CD8-positive, alpha-beta memory T cell (primary cell): ENCODE measurements at regions of chr19 and their contacts with region 1.

Region 1: GRCh38 chr19:13060964-13061927 is 41.4 kb downstream of the LYL1 start:
- DNase-seq: peak; percentile 63 to 76 (median 67)
- H3K4me3 ChIP-seq: peak overlapping the region; percentile 81
- H3K4me3 Mint-ChIP-seq: peak overlapping the region; percentile 72 to 94 (median 77)
- H3K27ac ChIP-seq: no peak overlapping the region
- H3K27ac Mint-ChIP-seq: peak overlapping the region in 3 of 8 donors; percentile 23 to 66 (median 47)
- H3K4me1 ChIP-seq: peaks cover 16% of the 10 kb centered on the region
- H3K4me1 Mint-ChIP-seq: peaks cover 8 to 11% (median 11%) of the 10 kb centered on the region in 3 donors
- H3K27me3 ChIP-seq: peaks cover 4% of the 10 kb centered on the region
- H3K27me3 Mint-ChIP-seq: peaks cover 15 to 33% of the 10 kb centered on the region in 2 donors

Region 2: DNA sequence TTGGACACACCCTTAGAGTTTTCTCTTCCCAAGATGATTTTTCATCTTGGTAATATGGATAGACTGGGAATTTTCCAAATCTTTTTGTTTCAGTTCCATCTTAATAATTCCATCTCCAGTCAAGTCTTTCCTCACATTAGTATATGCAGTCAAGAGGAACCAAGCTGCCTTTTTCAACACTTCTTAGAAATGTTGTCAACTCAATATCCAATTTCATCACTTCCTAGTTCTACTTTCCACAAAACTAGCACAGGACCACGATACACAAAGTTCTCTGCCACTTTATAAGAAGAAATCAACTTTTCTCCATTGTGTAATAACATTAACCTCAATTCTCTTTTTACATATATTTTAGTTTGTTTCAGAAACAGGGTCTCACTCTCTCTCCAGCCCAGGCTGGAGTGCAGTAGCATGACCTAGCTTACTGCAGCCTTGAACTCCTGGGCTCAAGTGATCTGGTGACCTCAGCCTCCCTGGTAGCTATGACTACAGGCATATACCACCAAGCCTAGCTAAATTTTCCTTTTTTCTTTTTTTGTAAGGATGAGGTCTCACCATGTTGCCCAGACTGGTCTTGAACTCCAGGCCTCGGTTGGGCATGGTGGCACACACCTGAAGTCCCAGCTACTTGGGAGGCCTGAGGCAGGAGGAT is 635.9 kb before region 1 on chr19:
- CTCF ChIA-PET with region 1: no interaction called
- POLR2A ChIA-PET with region 1: no interaction called
- DNase-seq: no peak
- H3K4me3 ChIP-seq: no peak overlapping the region
- H3K4me3 Mint-ChIP-seq: no peak overlapping the region
- H3K27ac ChIP-seq: no peak overlapping the region
- H3K27ac Mint-ChIP-seq: no peak overlapping the region
- H3K4me1 ChIP-seq: no peaks in the 10 kb centered on the region
- H3K4me1 Mint-ChIP-seq: no peaks in the 10 kb centered on the region
- H3K27me3 ChIP-seq: no peaks in the 10 kb centered on the region
- H3K27me3 Mint-ChIP-seq: no peaks in the 10 kb centered on the region

Region 3: DNA sequence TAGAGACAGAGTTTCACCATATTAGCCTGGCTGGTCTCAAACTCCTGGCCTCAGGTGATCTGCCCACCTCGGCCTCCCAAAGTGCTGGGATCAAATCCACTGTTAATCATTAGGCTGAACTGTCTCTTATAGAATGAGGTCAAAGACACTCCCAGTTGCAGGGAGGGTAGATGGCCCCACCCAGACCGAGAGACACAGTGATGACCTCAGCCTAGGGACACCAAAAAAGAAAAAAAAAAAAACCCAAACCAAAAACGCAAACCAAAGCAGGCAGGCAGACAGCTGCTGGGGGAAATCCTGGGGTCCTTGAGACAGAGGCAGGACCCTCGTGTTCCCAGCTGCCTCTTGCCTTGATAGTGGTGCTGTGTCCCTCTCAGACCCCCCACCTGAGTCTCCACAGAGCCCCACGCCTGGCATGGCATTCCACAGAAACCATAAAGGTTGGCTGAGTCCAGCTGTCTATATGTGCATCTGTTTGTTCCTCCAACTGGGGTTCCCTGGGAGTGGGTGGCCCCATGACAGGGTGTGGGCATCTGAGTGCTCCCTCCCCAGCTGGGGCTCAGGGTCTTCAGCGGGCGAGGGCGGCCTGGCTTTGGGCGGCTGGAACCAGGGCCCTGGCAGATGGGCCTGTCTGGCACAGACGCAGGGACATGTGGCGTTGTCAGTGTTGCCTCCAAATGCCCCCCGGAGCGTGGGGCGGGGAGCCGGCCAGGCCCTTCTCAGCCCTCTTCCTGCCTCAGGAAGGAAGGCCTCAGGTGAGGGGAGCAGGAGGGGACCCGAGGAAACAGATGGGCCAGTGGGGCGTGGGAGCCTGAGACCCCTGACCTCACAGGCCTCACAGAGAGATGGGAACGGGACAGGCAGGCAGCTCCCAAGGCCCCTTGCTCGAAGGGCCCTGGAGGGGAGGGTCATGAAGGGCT is 86.7 kb before region 1 on chr19:
- CTCF ChIA-PET with region 1: interaction called, 95 read pairs
- POLR2A ChIA-PET with region 1: no interaction called
- DNase-seq: no peak
- H3K4me3 ChIP-seq: no peak overlapping the region
- H3K4me3 Mint-ChIP-seq: no peak overlapping the region
- H3K27ac ChIP-seq: no peak overlapping the region
- H3K27ac Mint-ChIP-seq: peak overlapping the region in 1 of 8 donors; percentile 54
- H3K4me1 ChIP-seq: no peaks in the 10 kb centered on the region
- H3K4me1 Mint-ChIP-seq: peaks cover 0 to 3% (median 0%) of the 10 kb centered on the region in 3 donors
- H3K27me3 ChIP-seq: no peaks in the 10 kb centered on the region
- H3K27me3 Mint-ChIP-seq: peaks cover 19 to 26% of the 10 kb centered on the region in 2 donors

Region 4: DNA sequence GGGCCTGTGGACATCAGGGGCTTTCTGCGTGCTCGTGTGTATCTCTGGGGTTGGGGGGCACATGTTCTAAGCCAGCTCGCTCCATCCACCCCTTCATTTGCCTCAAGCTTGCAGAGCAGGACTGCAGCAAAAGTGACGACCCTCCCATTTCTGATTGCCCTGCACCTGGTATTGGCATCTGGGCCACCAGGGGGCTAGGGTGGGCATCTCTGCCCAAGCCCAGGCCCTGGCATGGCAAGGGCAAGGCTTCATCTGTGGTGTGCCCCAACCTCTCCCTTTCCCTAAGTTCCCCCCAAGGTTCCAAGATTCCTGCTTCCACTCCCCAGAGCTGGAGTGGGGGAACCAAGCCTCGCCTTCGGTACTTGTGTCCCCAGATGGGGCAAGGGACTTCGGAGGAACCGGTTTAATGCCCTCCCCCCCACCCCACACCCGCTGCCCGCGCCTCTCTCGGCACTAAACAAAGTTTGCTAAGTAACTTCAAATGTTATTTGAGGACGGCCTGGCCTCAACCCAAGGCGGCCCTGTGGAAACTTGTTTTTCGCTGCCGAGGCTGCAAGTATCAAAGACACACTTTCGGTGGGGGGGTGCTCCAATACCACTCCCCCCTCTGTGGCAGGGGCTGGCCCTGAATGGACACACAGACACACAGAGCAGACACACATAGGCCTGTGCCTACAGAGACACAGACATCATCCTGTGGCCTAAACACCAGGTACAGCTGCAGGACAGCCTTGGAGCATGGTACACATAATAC is 53.8 kb before region 1 on chr19:
- CTCF ChIA-PET with region 1: interaction called, 10 read pairs
- POLR2A ChIA-PET with region 1: no interaction called
- DNase-seq: no peak
- H3K4me3 ChIP-seq: no peak overlapping the region
- H3K4me3 Mint-ChIP-seq: no peak overlapping the region
- H3K27ac ChIP-seq: no peak overlapping the region
- H3K27ac Mint-ChIP-seq: no peak overlapping the region
- H3K4me1 ChIP-seq: peaks cover 4% of the 10 kb centered on the region
- H3K4me1 Mint-ChIP-seq: peaks cover 0 to 5% (median 1%) of the 10 kb centered on the region in 3 donors
- H3K27me3 ChIP-seq: peaks cover 9% of the 10 kb centered on the region
- H3K27me3 Mint-ChIP-seq: peaks cover 36 to 44% of the 10 kb centered on the region in 2 donors

Region 5: GRCh38 chr19:13033819-13034611 is 27.2 kb before region 1 on chr19:
- CTCF ChIA-PET with region 1: interaction called, 58 read pairs
- POLR2A ChIA-PET with region 1: no interaction called
- DNase-seq: peak in 3 of 5 donors; percentile 23 to 67 (median 29)
- H3K4me3 ChIP-seq: no peak overlapping the region
- H3K4me3 Mint-ChIP-seq: no peak overlapping the region
- H3K27ac ChIP-seq: no peak overlapping the region
- H3K27ac Mint-ChIP-seq: peak overlapping the region in 2 of 8 donors; percentile 70 to 78
- H3K4me1 ChIP-seq: no peaks in the 10 kb centered on the region
- H3K4me1 Mint-ChIP-seq: peaks cover 0 to 4% (median 0%) of the 10 kb centered on the region in 3 donors
- H3K27me3 ChIP-seq: no peaks in the 10 kb centered on the region
- H3K27me3 Mint-ChIP-seq: peaks cover 6 to 22% of the 10 kb centered on the region in 2 donors

Region 6: GRCh38 chr19:13093407-13094105 is 32.3 kb after region 1 on chr19:
- CTCF ChIA-PET with region 1: interaction called, 36 read pairs
- POLR2A ChIA-PET with region 1: no interaction called
- DNase-seq: peak; percentile 66 to 86 (median 72)
- H3K4me3 ChIP-seq: no peak overlapping the region
- H3K4me3 Mint-ChIP-seq: no peak overlapping the region
- H3K27ac ChIP-seq: no peak overlapping the region
- H3K27ac Mint-ChIP-seq: peak overlapping the region in 1 of 8 donors; percentile 6
- H3K4me1 ChIP-seq: peaks cover 29% of the 10 kb centered on the region
- H3K4me1 Mint-ChIP-seq: peaks cover 15 to 34% (median 16%) of the 10 kb centered on the region in 3 donors
- H3K27me3 ChIP-seq: peaks cover 17% of the 10 kb centered on the region
- H3K27me3 Mint-ChIP-seq: peaks cover 19 to 27% of the 10 kb centered on the region in 2 donors